ENCODE measurements at regions of chr22 and their contacts with region 1.

Region 1: GRCh38 chr22:41526837-41527799 is 17.2 kb downstream of the POLR3H start:
- DNase-seq: peak; percentile 52 to 65
- H3K4me3 ChIP-seq: no peak overlapping the region
- H3K27ac ChIP-seq: peak overlapping the region; percentile 27 to 95 (median 89)
- H3K4me1 ChIP-seq: peaks cover 41 to 52% (median 50%) of the 10 kb centered on the region in 4 donors
- H3K27me3 ChIP-seq: no peaks in the 10 kb centered on the region
- CTCF ChIP-seq: peak in 5 of 7 experiments; percentile 46 to 86 (median 81)
- EP300 ChIP-seq: no peak
- POLR2A ChIP-seq: no peak

Region 2: DNA sequence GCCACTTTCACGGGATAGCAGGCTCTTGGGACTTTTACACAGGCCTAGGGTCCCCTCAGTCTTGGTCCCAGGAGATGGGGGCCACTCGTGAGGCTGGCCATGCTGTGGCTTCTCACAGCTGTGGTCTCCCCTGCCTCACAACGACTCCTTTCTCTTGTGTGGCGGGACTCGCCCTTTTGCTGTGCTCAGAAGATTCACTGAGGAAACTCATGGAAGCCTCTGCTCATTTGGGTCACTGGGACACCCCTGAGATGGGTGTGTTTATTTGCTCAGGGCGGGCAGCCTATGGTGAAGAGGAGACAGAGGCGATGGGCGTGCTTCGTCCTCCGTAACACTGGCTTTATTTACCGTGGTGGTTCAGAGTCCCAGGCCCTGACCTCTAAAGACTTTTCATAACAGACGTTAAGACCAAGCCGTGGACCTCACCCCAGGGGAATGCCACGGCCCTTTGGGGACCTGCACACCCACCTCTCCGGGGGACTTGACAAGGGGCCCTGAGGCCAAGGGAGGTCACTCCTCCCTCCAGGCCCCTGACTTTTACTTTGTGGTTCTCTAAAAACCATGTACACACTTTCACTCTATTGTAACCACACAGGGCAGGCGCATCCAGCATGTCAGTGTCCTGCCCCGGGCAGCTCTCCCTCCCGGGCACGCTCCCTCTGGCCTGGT is 129.8 kb before region 1 on chr22:
- intact Hi-C with region 1: loop called (anchors 5 kb)
- DNase-seq: no peak
- H3K4me3 ChIP-seq: no peak overlapping the region
- H3K27ac ChIP-seq: peak overlapping the region in 1 of 5 donors; percentile 32
- H3K4me1 ChIP-seq: peaks cover 10 to 25% (median 13%) of the 10 kb centered on the region in 4 donors
- H3K27me3 ChIP-seq: no peaks in the 10 kb centered on the region
- CTCF ChIP-seq: no peak
- EP300 ChIP-seq: no peak
- POLR2A ChIP-seq: no peak

Region 3: GRCh38 chr22:41479671-41480396 is 47.3 kb before region 1 on chr22:
- intact Hi-C with region 1: no loop called
- DNase-seq: peak in 1 of 2 donors; percentile 51
- H3K4me3 ChIP-seq: no peak overlapping the region
- H3K27ac ChIP-seq: peak overlapping the region in 4 of 5 donors; percentile 59 to 85 (median 72)
- H3K4me1 ChIP-seq: peaks cover 44 to 95% (median 69%) of the 10 kb centered on the region in 4 donors
- H3K27me3 ChIP-seq: no peaks in the 10 kb centered on the region
- CTCF ChIP-seq: no peak
- EP300 ChIP-seq: no peak
- POLR2A ChIP-seq: no peak